ENCODE measurements at regions of chr20 and their contacts with region 1.

Region 1: GRCh38 chr20:63864847-63865640 is at the start of gene TPD52L2:
- DNase-seq: peak; percentile 99
- H3K4me3 Mint-ChIP-seq: peak within 1 kb of the TSS; percentile 78
- H3K27ac Mint-ChIP-seq: peak within 1 kb of the TSS; percentile 87
- H3K4me1 Mint-ChIP-seq: peaks cover 32% of the 10 kb centered on the region
- H3K27me3 Mint-ChIP-seq: no peaks in the 10 kb centered on the region
- total RNA-seq, gene TPD52L2: 67.8 to 70.8 TPM

Region 2: GRCh38 chr20:63707549-63708300 is 157.3 kb before region 1 on chr20 and contains the starts of genes ARFRP1 and ZGPAT:
- CTCF ChIA-PET with region 1: interaction called, 36 read pairs
- POLR2A ChIA-PET with region 1: interaction called, 3 read pairs
- intact Hi-C with region 1: loop called (anchors 2 kb)
- DNase-seq: peak; percentile 93
- H3K4me3 Mint-ChIP-seq: peak within 1 kb of the TSS; percentile 93
- H3K27ac Mint-ChIP-seq: peak within 1 kb of the TSS; percentile 94
- H3K4me1 Mint-ChIP-seq: peaks cover 44% of the 10 kb centered on the region
- H3K27me3 Mint-ChIP-seq: no peaks in the 10 kb centered on the region
- total RNA-seq, gene ARFRP1: 54.6 to 58.4 TPM
- total RNA-seq, gene ZGPAT: 28.7 to 29.9 TPM

Region 3: GRCh38 chr20:63850689-63851559 is 14.1 kb before region 1 on chr20:
- CTCF ChIA-PET with region 1: interaction called, 3 read pairs
- POLR2A ChIA-PET with region 1: interaction called, 4 read pairs
- intact Hi-C with region 1: loop called (anchors 2 kb)
- DNase-seq: peak; percentile 86
- H3K4me3 Mint-ChIP-seq: no peak overlapping the region
- H3K27ac Mint-ChIP-seq: no peak overlapping the region
- H3K4me1 Mint-ChIP-seq: peaks cover 16% of the 10 kb centered on the region
- H3K27me3 Mint-ChIP-seq: peaks cover 28% of the 10 kb centered on the region

Region 4: GRCh38 chr20:63973636-63974402 is 108.8 kb after region 1 on chr20:
- CTCF ChIA-PET with region 1: interaction called, 17 read pairs
- POLR2A ChIA-PET with region 1: interaction called, 3 read pairs
- intact Hi-C with region 1: no loop called
- DNase-seq: peak; percentile 83
- H3K4me3 Mint-ChIP-seq: no peak overlapping the region
- H3K27ac Mint-ChIP-seq: peak overlapping the region; percentile 31
- H3K4me1 Mint-ChIP-seq: peaks cover 37% of the 10 kb centered on the region
- H3K27me3 Mint-ChIP-seq: no peaks in the 10 kb centered on the region